HAP-1 (cell line): ENCODE measurements at regions of chr2 and their contacts with region 1.

Region 1: GRCh38 chr2:88669371-88670214 is 21.9 kb upstream of the RPIA start:
- DNase-seq: peak; percentile 32 to 41
- H3K4me3 ChIP-seq: no peak overlapping the region
- H3K4me1 ChIP-seq: no peaks in the 10 kb centered on the region
- H3K27me3 ChIP-seq: peaks cover 10% of the 10 kb centered on the region

Region 2: DNA sequence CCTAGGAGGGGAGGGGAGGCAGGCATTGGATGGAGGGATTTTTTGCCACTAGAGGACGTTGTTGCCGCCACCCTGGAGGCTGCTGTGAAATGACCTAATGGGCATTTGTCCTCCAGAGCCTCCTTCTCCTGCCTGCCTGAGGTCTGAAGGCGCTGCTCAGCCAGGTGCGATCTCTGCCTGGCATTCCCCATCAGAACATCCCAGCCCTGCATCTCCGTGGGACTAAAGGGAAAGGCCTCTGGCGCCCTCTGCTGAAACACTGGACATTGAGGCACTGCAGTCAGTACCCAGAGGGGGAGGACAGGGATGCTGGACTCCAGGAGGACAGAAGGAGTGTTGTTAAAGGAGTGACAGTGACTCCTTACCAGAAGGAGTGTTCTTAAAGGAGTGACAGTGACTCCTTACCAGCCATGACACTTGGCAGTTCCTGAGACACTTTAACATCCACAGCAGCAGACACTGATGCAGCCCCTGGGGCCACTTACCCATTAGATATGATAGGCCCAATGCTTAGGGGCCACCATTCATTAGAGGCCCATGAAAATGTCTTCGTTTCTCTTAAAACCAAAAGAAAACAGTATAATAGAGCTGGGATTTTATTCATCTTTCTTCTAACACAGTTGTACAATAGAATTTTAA is 482.4 kb before region 1 on chr2:
- in situ Hi-C with region 1: loop called (anchors 10 kb)
- DNase-seq: peak; percentile 29 to 76
- H3K4me3 ChIP-seq: no peak overlapping the region
- H3K4me1 ChIP-seq: no peaks in the 10 kb centered on the region
- H3K27me3 ChIP-seq: no peaks in the 10 kb centered on the region

Region 3: GRCh38 chr2:88199912-88200682 is 469.5 kb before region 1 on chr2:
- in situ Hi-C with region 1: loop called (anchors 10 kb)
- DNase-seq: peak in 1 of 2 experiments; percentile 55
- H3K4me3 ChIP-seq: no peak overlapping the region
- H3K4me1 ChIP-seq: no peaks in the 10 kb centered on the region
- H3K27me3 ChIP-seq: peaks cover 14% of the 10 kb centered on the region

Region 4: GRCh38 chr2:88590998-88591613 is 78.5 kb before region 1 on chr2:
- in situ Hi-C with region 1: loop called (anchors 5 kb)
- DNase-seq: peak; percentile 58 to 63
- H3K4me3 ChIP-seq: no peak overlapping the region
- H3K4me1 ChIP-seq: peaks cover 4% of the 10 kb centered on the region
- H3K27me3 ChIP-seq: no peaks in the 10 kb centered on the region; the same call in 1 of the 2 replicates